H1 (cell line): ENCODE measurements at regions of chr17 and their contacts with region 1.

Region 1: DNA sequence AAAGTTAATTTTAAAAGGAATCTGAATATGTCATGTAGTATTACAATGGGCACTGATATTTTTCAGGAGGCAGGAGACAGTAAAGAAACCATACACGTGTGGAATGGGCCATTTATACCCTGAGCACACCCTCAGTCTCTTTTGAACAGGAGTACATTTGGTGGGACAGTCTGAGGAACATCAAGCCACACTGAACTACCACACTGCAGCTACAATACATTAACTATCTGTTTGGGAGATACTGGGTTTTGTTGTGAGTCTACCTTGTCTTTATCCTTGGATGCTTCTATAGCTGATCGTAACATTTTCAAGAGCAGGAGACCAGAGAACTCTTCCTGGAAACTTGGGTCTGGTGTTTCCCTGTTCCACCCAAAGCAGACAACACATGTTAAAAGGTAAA is 31.7 kb downstream of the HEATR6 start:
- DNase-seq: no peak
- H3K4me3 ChIP-seq: no peak overlapping the region
- H3K27ac ChIP-seq: no peak overlapping the region
- H3K4me1 ChIP-seq: no peaks in the 10 kb centered on the region; a peak in 1 of 7 replicates
- H3K27me3 ChIP-seq: no peaks in the 10 kb centered on the region
- CTCF ChIP-seq: no peak
- EP300 ChIP-seq: no peak
- POLR2A ChIP-seq: no peak
- RAD21 ChIP-seq: no peak

Region 2: GRCh38 chr17:60036796-60037612 is 10.0 kb before region 1 on chr17:
- CTCF ChIA-PET with region 1: interaction called, 14 read pairs
- POLR2A ChIA-PET with region 1: interaction called, 9 read pairs
- DNase-seq: peak; percentile 44 to 84
- H3K4me3 ChIP-seq: no peak overlapping the region
- H3K27ac ChIP-seq: no peak overlapping the region; the same call in 1 of the 2 replicates
- H3K4me1 ChIP-seq: peaks cover 0 to 6% (median 3%) of the 10 kb centered on the region in 4 experiments; a peak in 5 of 7 replicates
- H3K27me3 ChIP-seq: no peaks in the 10 kb centered on the region
- CTCF ChIP-seq: peak; percentile 88 to 98 (median 98)
- EP300 ChIP-seq: no peak
- POLR2A ChIP-seq: peak in 1 of 2 experiments; percentile 59; a peak in 2 of 3 replicates
- RAD21 ChIP-seq: peak; percentile 61 to 69

Region 3: GRCh38 chr17:60065136-60065535 is 18.1 kb after region 1 on chr17:
- CTCF ChIA-PET with region 1: no interaction called
- POLR2A ChIA-PET with region 1: no interaction called
- DNase-seq: no peak
- H3K4me3 ChIP-seq: no peak overlapping the region
- H3K27ac ChIP-seq: no peak overlapping the region
- H3K4me1 ChIP-seq: no peaks in the 10 kb centered on the region
- H3K27me3 ChIP-seq: no peaks in the 10 kb centered on the region
- CTCF ChIP-seq: no peak
- EP300 ChIP-seq: no peak
- POLR2A ChIP-seq: no peak
- RAD21 ChIP-seq: no peak

Region 4: DNA sequence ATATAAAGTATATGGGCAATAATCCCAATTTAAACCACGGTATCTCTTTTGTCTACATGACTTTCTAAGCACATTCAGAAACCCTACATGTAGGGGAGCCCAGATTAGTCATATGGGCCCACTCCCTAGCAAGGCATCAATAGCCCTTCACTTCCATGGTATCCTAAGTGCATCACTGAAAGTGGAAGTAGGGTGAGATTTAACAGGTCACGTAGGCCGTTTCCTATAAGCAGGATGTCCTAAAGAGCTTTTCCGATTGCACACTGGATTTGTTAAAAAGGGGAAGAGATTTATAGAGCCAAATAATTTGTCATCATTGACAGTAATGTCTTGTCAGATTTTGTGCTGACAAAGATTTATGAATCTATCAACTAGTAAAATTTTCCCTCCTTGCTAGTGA is 141.7 kb after region 1 on chr17:
- CTCF ChIA-PET with region 1: no interaction called
- POLR2A ChIA-PET with region 1: no interaction called
- DNase-seq: no peak
- H3K4me3 ChIP-seq: no peak overlapping the region
- H3K27ac ChIP-seq: no peak overlapping the region
- H3K4me1 ChIP-seq: no peaks in the 10 kb centered on the region
- H3K27me3 ChIP-seq: no peaks in the 10 kb centered on the region
- CTCF ChIP-seq: no peak
- EP300 ChIP-seq: no peak
- POLR2A ChIP-seq: no peak
- RAD21 ChIP-seq: no peak